ENCODE measurements at regions of chr11 and their contacts with region 1.

Region 1: DNA sequence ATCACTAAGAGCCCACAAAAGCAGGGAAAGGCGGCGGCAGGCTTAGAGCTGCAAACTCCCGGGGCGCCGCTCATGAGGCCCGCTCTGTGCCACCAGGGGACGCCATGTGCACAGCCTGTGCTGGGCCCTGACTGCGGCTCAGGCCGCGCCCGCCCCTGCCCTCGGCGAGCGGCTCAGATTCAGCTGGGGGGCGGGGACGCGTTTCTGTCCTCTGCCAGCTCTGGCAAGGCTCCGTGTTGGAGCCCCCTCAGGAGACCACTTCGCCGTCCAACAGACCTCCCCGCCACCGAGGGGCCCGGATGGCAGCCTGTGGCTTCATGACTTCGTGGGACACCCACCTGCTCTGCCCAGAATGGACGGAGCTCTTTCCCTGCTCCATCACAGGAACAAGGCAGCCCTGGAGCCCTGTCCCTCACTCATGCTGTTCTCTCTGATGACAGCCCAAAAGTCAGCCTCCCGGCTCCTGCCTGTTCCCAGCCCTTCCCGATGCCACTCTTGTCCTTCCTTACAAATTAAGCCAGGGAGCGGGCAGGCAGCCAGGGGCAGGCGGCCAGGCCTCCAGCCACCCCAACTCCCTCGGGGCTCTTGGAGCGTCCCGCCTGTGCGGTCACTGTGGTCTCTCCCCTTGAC is 69.1 kb downstream of the NAT10 start:
- DNase-seq: peak; percentile 61
- H3K4me3 ChIP-seq: peak overlapping the region; percentile 28 to 34 (median 29)
- H3K27ac ChIP-seq: no peak overlapping the region
- H3K4me1 ChIP-seq: peaks cover 12% of the 10 kb centered on the region
- H3K27me3 ChIP-seq: no peaks in the 10 kb centered on the region
- CTCF ChIP-seq: peak; percentile 85 to 99

Region 2: DNA sequence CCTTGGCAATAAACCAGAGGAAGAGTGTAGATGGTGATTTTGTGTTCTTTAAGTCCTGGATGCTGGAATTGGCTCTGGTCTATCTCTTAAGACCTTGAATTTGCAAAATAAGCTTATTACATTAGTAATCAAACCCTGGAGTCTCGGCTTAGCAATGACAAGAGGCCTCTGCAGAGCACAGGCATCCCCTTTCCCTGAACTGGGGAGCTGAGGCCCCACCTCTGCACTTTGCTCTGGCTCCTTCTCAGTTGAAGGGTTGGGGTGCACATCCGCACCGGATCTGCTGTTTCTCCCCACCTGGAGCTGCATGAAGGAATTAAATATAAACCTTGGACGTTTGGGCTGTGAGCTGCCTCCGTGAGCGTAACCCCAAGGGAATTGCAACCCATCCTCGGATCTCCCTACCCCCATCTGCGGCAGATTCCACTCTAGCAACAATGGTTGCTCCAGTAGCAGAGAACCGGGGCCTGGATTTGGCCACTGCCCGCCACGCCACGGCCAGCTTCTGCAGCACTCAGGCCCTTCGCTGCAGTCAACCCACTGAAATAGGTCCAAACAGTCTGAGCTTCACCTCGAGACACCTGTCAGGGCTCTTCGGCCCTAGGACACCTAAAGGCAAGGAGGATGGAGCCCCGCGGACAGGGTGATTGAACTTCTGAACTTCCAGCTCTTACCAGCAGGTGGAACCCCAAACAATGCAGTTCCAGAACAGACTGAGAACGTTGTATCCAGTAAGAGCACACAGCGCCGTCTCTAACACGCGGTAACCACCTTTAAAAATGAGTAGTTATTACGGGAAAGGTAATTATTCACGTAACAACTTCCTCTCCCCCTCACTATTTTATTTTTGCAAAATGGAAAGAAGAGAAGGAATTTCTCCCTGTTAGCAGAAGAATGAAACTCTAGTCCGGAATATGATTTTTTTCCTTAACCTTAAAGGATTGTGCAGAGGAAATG is 177.8 kb before region 1 on chr11:
- CTCF ChIA-PET with region 1: no interaction called
- dilution Hi-C with region 1: no loop called
- in situ Hi-C with region 1: no loop called
- intact Hi-C with region 1: loop called (anchors 1 kb)
- DNase-seq: peak; percentile 69
- H3K4me3 ChIP-seq: no peak overlapping the region
- H3K27ac ChIP-seq: no peak overlapping the region
- H3K4me1 ChIP-seq: peaks cover 9% of the 10 kb centered on the region
- H3K27me3 ChIP-seq: no peaks in the 10 kb centered on the region
- CTCF ChIP-seq: peak; percentile 81 to 86

Region 3: GRCh38 chr11:34266090-34266912 is 91.8 kb after region 1 on chr11:
- CTCF ChIA-PET with region 1: no interaction called
- dilution Hi-C with region 1: loop called (anchors 5 kb)
- in situ Hi-C with region 1: no loop called
- intact Hi-C with region 1: loop called (anchors 1 kb)
- DNase-seq: peak; percentile 92
- H3K4me3 ChIP-seq: no peak overlapping the region
- H3K27ac ChIP-seq: no peak overlapping the region
- H3K4me1 ChIP-seq: peaks cover 25% of the 10 kb centered on the region
- H3K27me3 ChIP-seq: no peaks in the 10 kb centered on the region
- CTCF ChIP-seq: no peak

Region 4: DNA sequence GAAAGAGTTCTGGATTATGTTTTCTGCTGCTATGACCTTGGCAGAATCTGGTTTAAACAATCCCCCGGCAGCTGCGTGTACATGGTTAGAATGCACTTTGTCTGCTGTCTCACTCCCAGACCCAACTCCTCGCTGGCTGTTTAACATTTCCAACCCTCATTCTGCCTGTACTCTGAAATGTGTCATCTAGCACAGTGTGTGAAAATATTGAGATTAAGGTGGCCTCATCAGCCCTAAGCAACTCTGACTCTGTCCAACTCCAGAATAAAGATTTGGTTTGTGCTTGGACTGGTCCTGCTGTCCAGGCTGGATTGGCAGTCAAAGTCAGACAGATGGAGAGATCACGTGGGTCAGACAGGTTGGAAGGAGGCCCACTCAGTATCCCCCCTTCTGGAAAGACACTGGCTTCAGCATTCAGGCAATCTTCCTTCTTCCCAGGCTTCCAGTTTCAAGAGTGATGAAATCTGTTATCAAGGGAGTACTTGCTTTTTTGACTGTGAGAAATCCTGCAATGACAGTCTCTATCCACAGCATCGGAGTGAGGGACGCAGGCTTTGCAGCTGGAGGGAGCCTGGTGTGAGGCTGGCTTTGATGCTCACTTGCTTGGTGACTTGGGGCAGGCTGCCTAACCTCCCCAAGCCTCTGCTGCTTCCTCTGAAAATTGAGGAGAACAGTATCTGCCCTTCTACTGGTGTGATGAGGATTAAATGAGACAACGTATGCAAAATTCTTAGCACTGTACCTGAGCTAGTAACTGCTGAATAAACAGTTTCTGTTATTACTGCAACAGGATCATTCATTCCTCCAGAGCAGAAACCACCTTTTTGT is 153.5 kb after region 1 on chr11:
- CTCF ChIA-PET with region 1: interaction called, 14 read pairs
- dilution Hi-C with region 1: no loop called
- in situ Hi-C with region 1: no loop called
- intact Hi-C with region 1: no loop called
- DNase-seq: no peak
- H3K4me3 ChIP-seq: no peak overlapping the region
- H3K27ac ChIP-seq: no peak overlapping the region
- H3K4me1 ChIP-seq: peaks cover 15% of the 10 kb centered on the region
- H3K27me3 ChIP-seq: no peaks in the 10 kb centered on the region
- CTCF ChIP-seq: no peak

Region 5: DNA sequence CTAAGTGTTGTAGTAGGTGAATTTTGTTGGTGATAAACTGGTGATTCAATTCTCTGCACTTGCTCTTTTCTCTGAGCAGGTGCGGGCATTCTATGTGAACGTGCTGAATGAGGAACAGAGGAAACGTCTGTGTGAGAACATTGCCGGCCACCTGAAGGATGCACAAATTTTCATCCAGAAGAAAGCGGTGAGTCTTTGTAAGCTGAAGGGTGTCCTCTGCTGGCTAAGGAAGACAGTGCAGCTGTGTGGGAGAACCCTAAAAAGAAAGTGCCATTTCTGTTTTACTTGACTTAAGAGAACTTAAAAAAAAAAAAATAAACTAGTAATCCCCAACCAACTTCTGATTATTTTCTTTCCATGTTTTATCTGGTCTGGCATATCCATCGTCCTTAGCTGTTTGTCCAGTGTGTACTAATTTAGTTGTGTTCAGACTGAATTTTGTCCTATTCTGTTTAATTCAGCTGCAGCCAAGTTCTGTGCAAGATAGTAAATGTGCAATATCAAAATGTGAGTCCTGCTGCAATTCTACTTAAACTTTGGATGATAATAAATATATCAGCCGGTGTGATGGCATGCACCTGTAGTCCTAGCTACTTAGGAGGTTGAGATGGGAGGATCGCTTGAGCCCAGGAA is 293.8 kb after region 1 on chr11:
- CTCF ChIA-PET with region 1: no interaction called
- dilution Hi-C with region 1: loop called (anchors 25 kb)
- in situ Hi-C with region 1: no loop called
- intact Hi-C with region 1: loop called (anchors 1 kb)
- DNase-seq: peak; percentile 19
- H3K4me3 ChIP-seq: no peak overlapping the region
- H3K27ac ChIP-seq: no peak overlapping the region
- H3K4me1 ChIP-seq: no peaks in the 10 kb centered on the region
- H3K27me3 ChIP-seq: no peaks in the 10 kb centered on the region
- CTCF ChIP-seq: peak; percentile 85 to 91

Region 6: GRCh38 chr11:34890812-34891211 is 716.3 kb after region 1 on chr11:
- CTCF ChIA-PET with region 1: no interaction called
- dilution Hi-C with region 1: no loop called
- in situ Hi-C with region 1: no loop called
- intact Hi-C with region 1: loop called (anchors 2 kb)
- DNase-seq: peak; percentile 21
- H3K4me3 ChIP-seq: no peak overlapping the region
- H3K27ac ChIP-seq: no peak overlapping the region
- H3K4me1 ChIP-seq: no peaks in the 10 kb centered on the region
- H3K27me3 ChIP-seq: no peaks in the 10 kb centered on the region
- CTCF ChIP-seq: peak; percentile 39 to 54

Measured in mammary epithelial cell (primary cell).